PC-3 (cell line): ENCODE measurements at regions of chr18 and their contacts with region 1.

Region 1: DNA sequence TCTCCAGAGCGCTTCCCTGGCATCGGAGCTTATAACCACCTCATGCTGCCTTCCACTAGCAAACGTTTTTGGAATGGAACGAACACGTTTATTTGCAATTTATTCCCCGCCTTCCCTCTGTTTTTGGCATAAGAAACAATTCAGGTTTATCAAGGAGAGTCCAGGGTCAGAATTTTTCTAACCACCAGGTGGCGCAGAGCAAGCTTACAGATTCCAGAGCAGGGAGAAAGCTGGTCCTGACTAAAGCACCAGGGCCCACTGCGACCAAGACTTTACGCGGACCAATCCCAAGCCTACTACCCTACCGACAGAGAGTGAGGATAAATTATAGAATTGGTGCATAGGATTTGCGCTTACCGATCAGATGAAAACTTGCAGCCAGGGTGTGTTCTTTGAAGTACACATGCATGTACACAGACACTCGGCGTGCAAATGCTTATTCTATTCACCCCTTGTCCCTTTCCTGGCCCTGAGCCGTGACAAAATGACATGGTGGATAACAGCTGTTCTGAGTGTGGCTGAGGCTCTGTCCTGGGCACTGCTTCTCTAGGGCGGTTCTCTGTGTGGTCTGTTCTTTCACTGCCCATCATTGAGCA is 34.7 kb downstream of the NAPG start:
- DNase-seq: peak; percentile 83
- ATAC-seq: peak; percentile 76
- H3K4me3 ChIP-seq: no peak overlapping the region; the same call in 1 of the 2 replicates
- H3K27ac ChIP-seq: no peak overlapping the region
- H3K4me1 ChIP-seq: peaks cover 11% of the 10 kb centered on the region
- H3K27me3 ChIP-seq: no peaks in the 10 kb centered on the region
- CTCF ChIP-seq: peak; percentile 84

Region 2: GRCh38 chr18:10670856-10671255 is 110.3 kb after region 1 on chr18:
- CTCF ChIA-PET with region 1: no interaction called
- POLR2A ChIA-PET with region 1: no interaction called
- intact Hi-C with region 1: loop called (anchors 5 kb)
- DNase-seq: no peak
- ATAC-seq: no peak
- H3K4me3 ChIP-seq: no peak overlapping the region
- H3K27ac ChIP-seq: no peak overlapping the region
- H3K4me1 ChIP-seq: no peaks in the 10 kb centered on the region
- H3K27me3 ChIP-seq: peaks cover 87% of the 10 kb centered on the region
- CTCF ChIP-seq: no peak